CD8-positive, alpha-beta T cell (primary cell): ENCODE measurements at regions of chr1 and their contacts with region 1.

Region 1: GRCh38 chr1:185646202-185646683 is 87.9 kb upstream of the HMCN1 start:
- DNase-seq: no peak
- ATAC-seq: no peak
- H3K4me3 ChIP-seq: no peak overlapping the region
- H3K4me3 Mint-ChIP-seq: no peak overlapping the region
- H3K27ac ChIP-seq: no peak overlapping the region
- H3K27ac Mint-ChIP-seq: no peak overlapping the region
- H3K4me1 ChIP-seq: peaks cover 21% of the 10 kb centered on the region
- H3K4me1 Mint-ChIP-seq: peaks cover 40% of the 10 kb centered on the region
- H3K27me3 ChIP-seq: no peaks in the 10 kb centered on the region
- H3K27me3 Mint-ChIP-seq: no peaks in the 10 kb centered on the region
- CTCF ChIP-seq: no peak

Region 2: DNA sequence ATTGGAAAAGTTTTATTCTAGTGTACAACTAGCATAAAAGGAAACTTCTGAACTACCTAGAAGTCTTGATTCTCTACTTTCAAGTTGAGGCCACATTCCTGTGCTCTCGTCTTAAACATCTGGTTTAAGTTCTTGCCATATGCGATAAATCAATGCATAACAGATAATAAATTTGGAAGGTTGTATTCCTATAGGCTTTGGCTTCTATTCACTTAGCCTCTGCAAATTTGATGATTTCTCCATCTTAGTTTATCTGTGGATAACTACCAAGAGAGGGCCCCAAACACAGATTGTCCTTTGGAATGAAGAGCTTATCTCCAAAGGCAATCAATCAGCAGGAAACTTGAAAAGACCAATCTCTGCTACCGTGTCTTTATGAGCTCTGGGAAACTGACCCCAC is 612.6 kb before region 1 on chr1:
- CTCF ChIA-PET with region 1: no interaction called
- POLR2A ChIA-PET with region 1: no interaction called
- intact Hi-C with region 1: no loop called
- DNase-seq: no peak
- ATAC-seq: no peak
- H3K4me3 ChIP-seq: no peak overlapping the region
- H3K4me3 Mint-ChIP-seq: no peak overlapping the region
- H3K27ac ChIP-seq: no peak overlapping the region
- H3K27ac Mint-ChIP-seq: no peak overlapping the region
- H3K4me1 ChIP-seq: no peaks in the 10 kb centered on the region
- H3K4me1 Mint-ChIP-seq: no peaks in the 10 kb centered on the region
- H3K27me3 ChIP-seq: peaks cover 0 to 4% of the 10 kb centered on the region in 2 experiments
- H3K27me3 Mint-ChIP-seq: peaks cover 4% of the 10 kb centered on the region
- CTCF ChIP-seq: no peak

Region 3: DNA sequence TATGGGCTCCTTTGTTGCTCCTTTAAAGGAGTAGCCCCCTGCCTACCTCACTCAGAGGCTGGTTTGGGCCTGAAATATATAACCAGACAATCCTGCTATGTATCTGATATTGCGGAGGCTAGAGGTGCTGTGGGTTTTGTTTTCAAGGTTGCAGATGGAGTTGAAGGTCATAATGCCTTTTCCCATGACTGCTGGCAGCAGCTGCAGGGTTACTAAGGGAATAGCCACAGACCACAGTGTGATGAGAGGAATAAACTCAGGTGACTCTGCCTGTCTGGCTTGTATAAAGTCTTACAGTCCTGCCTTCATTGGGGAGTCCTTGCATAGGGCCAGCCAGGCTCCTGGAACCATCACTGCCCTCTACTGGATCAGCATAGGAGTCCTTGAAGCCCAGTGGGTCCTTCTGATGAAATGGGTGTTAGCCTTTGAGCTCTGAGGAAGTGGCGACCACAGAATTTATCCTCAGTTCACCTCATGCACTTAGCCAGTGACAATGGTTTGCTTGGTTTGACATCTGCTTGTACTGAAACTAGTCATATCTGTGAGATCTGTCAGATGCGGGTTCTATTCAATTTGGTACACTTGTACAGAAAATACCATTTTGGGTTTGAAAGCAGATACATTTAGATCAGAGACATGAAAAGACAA is 86.4 kb before region 1 on chr1:
- CTCF ChIA-PET with region 1: no interaction called
- POLR2A ChIA-PET with region 1: no interaction called
- intact Hi-C with region 1: loop called in 1 of 2 experiments (anchors 5 kb)
- DNase-seq: peak; percentile 8 to 85 (median 51)
- ATAC-seq: peak; percentile 69
- H3K4me3 ChIP-seq: no peak overlapping the region
- H3K4me3 Mint-ChIP-seq: peak overlapping the region; percentile 40
- H3K27ac ChIP-seq: peak overlapping the region in 1 of 2 experiments; percentile 63
- H3K27ac Mint-ChIP-seq: peak overlapping the region; percentile 70
- H3K4me1 ChIP-seq: peaks cover 30% of the 10 kb centered on the region
- H3K4me1 Mint-ChIP-seq: peaks cover 48% of the 10 kb centered on the region
- H3K27me3 ChIP-seq: no peaks in the 10 kb centered on the region
- H3K27me3 Mint-ChIP-seq: no peaks in the 10 kb centered on the region
- CTCF ChIP-seq: no peak

Region 4: DNA sequence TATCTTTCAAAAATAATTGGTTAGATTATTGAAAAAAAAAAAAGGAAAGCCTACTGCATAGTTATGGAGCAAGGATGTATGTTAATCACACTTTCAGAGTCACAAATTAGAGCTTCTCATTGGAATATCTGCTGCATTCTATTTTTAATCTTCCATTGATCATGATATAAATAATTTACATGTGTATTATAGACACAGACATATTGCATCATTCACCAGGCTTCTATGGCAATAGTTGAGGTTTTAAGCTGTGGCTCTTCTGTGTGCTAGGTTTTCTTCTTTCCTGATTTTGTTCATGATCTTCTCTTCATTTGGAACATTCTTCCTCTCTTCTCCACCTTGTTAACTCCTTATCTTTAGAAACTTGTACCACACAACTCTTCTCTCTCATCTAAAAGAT is 35.3 kb before region 1 on chr1:
- CTCF ChIA-PET with region 1: no interaction called
- POLR2A ChIA-PET with region 1: no interaction called
- intact Hi-C with region 1: loop called in 1 of 2 experiments (anchors 5 kb)
- DNase-seq: no peak
- ATAC-seq: no peak
- H3K4me3 ChIP-seq: no peak overlapping the region
- H3K4me3 Mint-ChIP-seq: no peak overlapping the region
- H3K27ac ChIP-seq: no peak overlapping the region
- H3K27ac Mint-ChIP-seq: no peak overlapping the region
- H3K4me1 ChIP-seq: no peaks in the 10 kb centered on the region
- H3K4me1 Mint-ChIP-seq: no peaks in the 10 kb centered on the region
- H3K27me3 ChIP-seq: no peaks in the 10 kb centered on the region
- H3K27me3 Mint-ChIP-seq: peaks cover 2% of the 10 kb centered on the region
- CTCF ChIP-seq: no peak